AG04450 (cell line): ENCODE measurements at regions of chr4 and their contacts with region 1.

Region 1: DNA sequence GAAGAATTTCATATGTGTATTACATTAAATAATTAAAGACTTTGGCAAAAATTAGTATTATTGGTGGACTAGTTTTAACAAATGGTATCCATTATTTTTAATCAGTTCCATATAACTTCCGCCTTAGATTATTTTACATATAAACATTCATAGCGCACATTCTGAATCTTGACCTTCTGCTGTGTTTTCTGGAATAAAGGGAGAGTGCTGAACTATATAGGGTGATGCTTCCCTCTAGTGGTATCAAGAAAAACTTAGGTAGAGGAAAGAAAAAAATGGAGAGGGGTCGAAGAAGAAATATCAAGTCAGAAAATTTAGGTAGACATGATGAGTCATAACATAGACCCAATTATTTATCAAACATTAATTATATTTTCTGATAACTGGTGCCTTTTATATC is 155.6 kb upstream of the PACRGL start:
- DNase-seq: no peak
- H3K4me3 ChIP-seq: no peak overlapping the region
- H3K27ac ChIP-seq: no peak overlapping the region
- H3K27me3 ChIP-seq: no peaks in the 10 kb centered on the region
- CTCF ChIP-seq: peak; percentile 73

Region 2: DNA sequence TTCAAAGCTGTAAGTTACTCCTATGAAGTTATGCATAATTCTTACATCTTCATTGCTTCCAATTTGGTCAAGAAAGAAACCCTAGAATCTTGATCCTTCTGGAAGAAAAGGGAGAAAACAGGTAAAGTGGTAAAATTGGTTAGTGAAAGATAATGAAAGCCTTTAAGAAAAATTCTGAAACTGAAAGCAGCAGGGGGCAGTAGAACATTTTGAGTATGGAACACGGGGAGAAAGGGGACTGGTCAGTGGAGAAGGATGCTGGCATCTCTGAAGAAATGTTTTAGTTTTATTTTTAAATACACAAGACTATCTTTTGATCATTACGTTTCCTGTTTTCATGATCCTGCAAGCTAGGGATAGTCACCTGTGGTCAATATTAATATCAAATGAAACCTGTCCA is 238.7 kb before region 1 on chr4:
- CTCF ChIA-PET with region 1: interaction called, 32 read pairs
- POLR2A ChIA-PET with region 1: no interaction called
- DNase-seq: peak; percentile 27
- H3K4me3 ChIP-seq: no peak overlapping the region
- H3K27ac ChIP-seq: no peak overlapping the region
- H3K27me3 ChIP-seq: no peaks in the 10 kb centered on the region
- CTCF ChIP-seq: peak; percentile 59

Region 3: GRCh38 chr4:20416800-20417199 is 127.8 kb before region 1 on chr4:
- CTCF ChIA-PET with region 1: interaction called, 26 read pairs
- POLR2A ChIA-PET with region 1: no interaction called
- DNase-seq: no peak
- H3K4me3 ChIP-seq: no peak overlapping the region
- H3K27ac ChIP-seq: no peak overlapping the region
- H3K27me3 ChIP-seq: no peaks in the 10 kb centered on the region
- CTCF ChIP-seq: no peak

Region 4: DNA sequence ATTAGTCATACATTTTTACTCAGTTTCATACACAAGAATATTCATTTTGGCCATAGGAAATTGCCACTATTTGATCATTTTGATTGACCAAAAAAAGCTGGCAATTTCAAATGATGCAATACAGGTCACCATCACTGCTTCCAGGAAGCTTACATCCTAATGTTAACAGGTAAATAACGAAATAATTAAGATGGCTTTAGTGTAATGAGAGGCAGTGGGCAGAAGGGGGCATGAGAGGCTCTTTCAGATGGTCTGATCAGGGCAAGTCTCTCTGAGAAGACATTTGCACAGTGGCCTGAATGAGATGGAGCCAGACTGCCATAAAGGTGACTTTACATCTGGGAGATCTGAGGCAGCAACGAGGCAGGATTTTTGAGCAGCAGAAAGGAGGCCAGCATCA is 122.2 kb before region 1 on chr4:
- CTCF ChIA-PET with region 1: interaction called, 26 read pairs
- POLR2A ChIA-PET with region 1: no interaction called
- DNase-seq: no peak
- H3K4me3 ChIP-seq: no peak overlapping the region
- H3K27ac ChIP-seq: no peak overlapping the region
- H3K27me3 ChIP-seq: no peaks in the 10 kb centered on the region
- CTCF ChIP-seq: peak; percentile 58

Region 5: GRCh38 chr4:20428436-20429160 is 116.0 kb before region 1 on chr4:
- CTCF ChIA-PET with region 1: interaction called, 20 read pairs
- POLR2A ChIA-PET with region 1: no interaction called
- DNase-seq: no peak
- H3K4me3 ChIP-seq: no peak overlapping the region
- H3K27ac ChIP-seq: no peak overlapping the region
- H3K27me3 ChIP-seq: no peaks in the 10 kb centered on the region
- CTCF ChIP-seq: peak; percentile 46

Region 6: DNA sequence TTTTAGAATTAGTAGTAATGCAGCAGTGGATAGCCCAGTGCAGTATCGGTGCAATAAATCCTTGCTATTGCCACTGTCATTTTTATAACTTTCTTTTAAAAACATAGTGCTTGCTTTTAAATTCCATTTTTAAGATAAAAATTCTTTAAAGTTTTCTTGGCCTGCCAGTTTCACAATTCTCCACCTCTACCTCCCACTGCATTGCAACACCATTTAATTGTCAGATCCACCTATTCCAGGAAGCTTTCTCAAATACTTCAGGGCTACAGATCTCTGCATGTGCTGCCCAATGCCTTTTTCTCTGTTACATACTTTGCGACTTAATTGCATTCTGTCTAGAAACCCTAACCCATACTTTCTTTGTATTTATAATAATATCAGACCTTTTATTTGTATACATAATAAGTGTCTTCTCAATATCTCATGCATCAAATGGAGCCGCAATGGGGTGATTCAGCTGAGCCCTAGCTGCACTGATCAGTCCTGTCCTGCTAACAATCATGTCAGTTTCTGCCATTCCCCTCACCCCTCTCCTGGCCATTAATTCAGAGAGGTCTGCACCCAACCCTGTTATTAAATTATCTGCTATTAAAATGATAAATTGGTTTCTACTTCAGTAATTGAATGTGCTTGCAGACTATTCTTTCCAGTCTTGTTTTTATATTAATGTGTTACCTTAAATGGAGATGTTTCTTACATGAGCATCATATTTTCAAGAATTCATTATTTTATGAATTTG is 99.9 kb before region 1 on chr4:
- CTCF ChIA-PET with region 1: interaction called, 12 read pairs
- POLR2A ChIA-PET with region 1: interaction called, 3 read pairs
- DNase-seq: no peak
- H3K4me3 ChIP-seq: no peak overlapping the region
- H3K27ac ChIP-seq: no peak overlapping the region
- H3K27me3 ChIP-seq: no peaks in the 10 kb centered on the region
- CTCF ChIP-seq: no peak

Region 7: DNA sequence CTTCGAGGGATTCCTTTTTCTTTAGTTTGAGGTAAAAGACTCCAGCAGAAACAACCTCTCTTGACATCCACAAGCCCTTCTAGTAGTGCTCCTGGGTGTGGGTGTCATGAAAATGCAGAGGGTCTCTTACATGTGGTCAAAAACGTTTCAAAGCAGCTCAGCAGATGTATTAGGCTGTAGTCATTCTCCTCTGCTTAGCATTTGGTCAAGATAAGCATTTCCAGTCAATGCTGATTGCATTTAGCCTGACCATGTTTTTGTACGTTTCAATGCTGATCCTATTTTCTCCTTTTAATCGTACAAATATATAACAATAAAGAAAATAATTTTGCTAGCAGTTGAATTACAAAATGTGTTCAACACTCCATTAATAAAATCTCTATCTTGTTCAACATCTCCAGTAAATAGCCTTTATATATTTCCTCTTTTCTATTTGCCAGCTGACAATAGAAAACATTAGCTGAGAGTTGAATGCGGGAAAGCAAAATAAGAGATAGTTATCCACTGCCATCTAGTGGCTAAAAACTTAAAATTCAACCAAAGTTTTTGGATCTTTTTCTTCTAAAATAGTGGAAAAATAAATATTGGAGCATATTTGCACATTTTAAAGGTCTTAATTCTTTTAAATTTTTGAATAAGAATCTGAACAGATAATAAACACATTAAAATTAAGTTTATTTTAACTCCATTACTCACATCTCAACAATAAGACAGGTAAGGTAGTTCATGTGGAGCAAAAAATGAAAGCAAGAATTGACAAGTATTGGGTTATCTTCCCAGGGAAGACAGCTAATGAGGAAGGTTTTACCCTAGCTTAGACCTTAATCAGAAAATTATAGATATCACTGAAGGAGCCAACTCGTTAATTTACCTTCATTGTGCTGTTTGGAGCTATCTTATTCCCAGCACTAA is 140.5 kb after region 1 on chr4:
- CTCF ChIA-PET with region 1: interaction called, 18 read pairs
- POLR2A ChIA-PET with region 1: no interaction called
- DNase-seq: peak; percentile 3
- H3K4me3 ChIP-seq: no peak overlapping the region
- H3K27ac ChIP-seq: no peak overlapping the region
- H3K27me3 ChIP-seq: peaks cover 12% of the 10 kb centered on the region
- CTCF ChIP-seq: peak; percentile 61

Region 8: GRCh38 chr4:20883231-20883630 is 338.6 kb after region 1 on chr4:
- CTCF ChIA-PET with region 1: no interaction called
- POLR2A ChIA-PET with region 1: no interaction called
- DNase-seq: no peak
- H3K4me3 ChIP-seq: no peak overlapping the region
- H3K27ac ChIP-seq: no peak overlapping the region
- H3K27me3 ChIP-seq: no peaks in the 10 kb centered on the region
- CTCF ChIP-seq: no peak

Region 9: DNA sequence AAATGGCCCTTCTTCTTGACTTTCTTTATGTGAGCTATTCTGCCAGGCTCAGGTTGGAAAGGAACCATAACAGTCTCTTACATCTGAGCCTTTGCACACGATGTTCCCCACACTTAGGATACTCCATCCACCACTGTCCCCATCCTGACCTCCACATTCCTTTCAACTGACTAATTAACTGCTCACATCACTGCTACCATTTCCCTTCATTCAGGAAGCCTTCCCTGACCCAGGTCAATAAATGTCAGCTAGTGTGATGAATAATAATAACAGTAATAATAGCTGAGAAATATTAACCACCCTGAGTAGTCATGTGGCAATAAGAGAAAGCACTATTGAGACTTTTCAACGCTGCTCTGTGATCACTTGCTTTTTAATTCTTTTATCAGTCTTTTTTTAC is 1112.2 kb after region 1 on chr4:
- CTCF ChIA-PET with region 1: no interaction called
- POLR2A ChIA-PET with region 1: no interaction called
- DNase-seq: no peak
- H3K4me3 ChIP-seq: no peak overlapping the region
- H3K27ac ChIP-seq: no peak overlapping the region
- H3K27me3 ChIP-seq: no peaks in the 10 kb centered on the region
- CTCF ChIP-seq: no peak